HEK293 (cell line): ENCODE measurements at regions of chr6 and their contacts with region 1.

Region 1: DNA sequence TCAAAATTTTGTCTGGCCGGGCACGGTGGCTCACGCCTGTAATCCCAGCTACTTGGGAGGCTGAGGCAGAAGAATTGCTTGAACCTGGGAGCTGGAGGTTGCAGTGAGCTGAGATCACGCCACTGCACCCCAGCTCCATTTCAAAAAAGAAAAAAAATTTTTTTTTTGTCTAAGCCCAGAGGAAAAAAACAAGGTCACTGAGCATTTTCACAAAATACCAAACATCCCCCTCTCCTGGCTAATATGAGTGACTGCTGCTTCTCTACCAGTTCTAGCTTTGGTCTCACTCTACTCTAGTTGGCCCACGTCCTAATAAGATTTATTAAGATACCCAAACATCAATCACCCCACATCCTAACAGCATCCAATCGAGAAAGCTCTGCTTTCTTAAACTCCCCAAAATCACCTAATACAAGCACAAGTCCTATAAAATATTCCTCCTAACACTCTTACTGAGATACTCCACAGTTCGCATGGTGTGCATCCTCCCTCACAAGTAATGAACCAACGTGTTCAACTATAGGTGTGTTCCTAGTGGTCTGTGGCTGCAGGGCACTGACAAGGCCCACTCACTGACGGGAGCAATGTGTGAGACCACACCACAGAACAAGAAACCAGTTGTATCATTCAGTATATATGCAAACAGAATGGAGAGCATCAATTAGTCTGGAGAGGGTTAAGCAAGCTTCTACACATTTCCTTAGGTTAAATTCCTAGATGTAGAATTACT is 64.2 kb downstream of the FKBP5 start:
- H3K4me3 ChIP-seq: no peak overlapping the region
- H3K27ac ChIP-seq: no peak overlapping the region
- H3K4me1 ChIP-seq: no peaks in the 10 kb centered on the region; the same call in 1 of the 2 replicates
- CTCF ChIP-seq: no peak

Region 2: DNA sequence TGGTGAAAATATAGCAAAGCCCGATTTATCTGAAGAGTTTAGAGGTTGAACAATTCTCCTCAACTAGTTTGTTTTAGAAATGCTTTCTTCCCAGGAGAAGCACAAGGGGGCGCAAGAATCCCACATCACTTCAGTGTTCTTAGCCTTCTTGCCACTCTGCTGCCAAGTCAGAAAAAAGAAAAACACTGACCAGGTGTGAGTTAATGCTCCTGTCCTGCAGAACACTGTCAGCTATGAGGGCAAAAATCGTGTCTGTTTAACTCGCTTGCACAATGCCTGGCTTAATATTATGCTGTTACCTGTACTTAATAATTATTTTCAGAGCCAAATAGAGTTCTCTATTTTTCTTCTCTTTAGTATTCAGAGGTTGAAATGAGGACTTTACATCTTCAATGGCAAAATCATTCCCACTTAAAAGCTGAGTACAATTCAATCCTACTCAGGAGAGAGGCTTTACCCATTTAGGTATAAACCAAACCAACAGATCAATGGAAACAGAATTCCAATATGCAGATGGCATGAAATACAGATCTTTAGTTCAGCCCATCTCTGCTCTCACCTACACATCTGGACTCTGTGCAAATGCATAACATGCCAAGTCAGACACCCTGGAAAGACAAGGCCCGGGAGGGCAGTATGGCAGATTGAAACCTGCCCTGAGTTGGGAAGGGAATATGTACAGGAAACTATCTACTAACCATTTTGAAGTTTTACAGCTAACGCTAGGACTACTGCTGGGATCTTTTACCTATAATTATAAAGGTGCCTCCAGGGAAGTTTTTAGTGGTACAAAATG is 40.4 kb before region 1 on chr6:
- CTCF ChIA-PET with region 1: interaction called, 10 read pairs
- POLR2A ChIA-PET with region 1: no interaction called
- H3K4me3 ChIP-seq: no peak overlapping the region
- H3K27ac ChIP-seq: no peak overlapping the region
- H3K4me1 ChIP-seq: no peaks in the 10 kb centered on the region
- CTCF ChIP-seq: peak; percentile 69; the same call in 1 of the 2 replicates

Region 3: GRCh38 chr6:35601331-35602132 is 23.0 kb before region 1 on chr6:
- CTCF ChIA-PET with region 1: interaction called, 10 read pairs
- POLR2A ChIA-PET with region 1: interaction called, 4 read pairs
- H3K4me3 ChIP-seq: no peak overlapping the region
- H3K27ac ChIP-seq: no peak overlapping the region
- H3K4me1 ChIP-seq: peaks cover 35% of the 10 kb centered on the region
- CTCF ChIP-seq: no peak

Region 4: GRCh38 chr6:35642471-35643161 is 18.1 kb after region 1 on chr6:
- CTCF ChIA-PET with region 1: interaction called, 17 read pairs
- POLR2A ChIA-PET with region 1: interaction called, 3 read pairs
- H3K4me3 ChIP-seq: no peak overlapping the region
- H3K27ac ChIP-seq: no peak overlapping the region
- H3K4me1 ChIP-seq: no peaks in the 10 kb centered on the region; the same call in 1 of the 2 replicates
- CTCF ChIP-seq: no peak

Region 5: GRCh38 chr6:35710241-35710847 is 85.8 kb after region 1 on chr6:
- CTCF ChIA-PET with region 1: no interaction called
- POLR2A ChIA-PET with region 1: no interaction called
- H3K4me3 ChIP-seq: no peak overlapping the region
- H3K27ac ChIP-seq: no peak overlapping the region
- H3K4me1 ChIP-seq: no peaks in the 10 kb centered on the region
- CTCF ChIP-seq: no peak